Activated CD4-positive, alpha-beta memory T cell treated with anti-CD3 and anti-CD28 coated beads for 36 hours (primary cell): ENCODE measurements at regions of chr5 and their contacts with region 1.

Region 1: GRCh38 chr5:112146323-112147226 is 272.5 kb downstream of the EPB41L4A start:
- DNase-seq: peak; percentile 64
- H3K4me3 Mint-ChIP-seq: no peak overlapping the region
- H3K27ac Mint-ChIP-seq: peak overlapping the region; percentile 45
- H3K4me1 Mint-ChIP-seq: no peaks in the 10 kb centered on the region
- H3K27me3 Mint-ChIP-seq: peaks cover 9% of the 10 kb centered on the region

Region 2: GRCh38 chr5:111530298-111530740 is 616.3 kb before region 1 on chr5:
- CTCF ChIA-PET with region 1: interaction called, 7 read pairs
- POLR2A ChIA-PET with region 1: no interaction called
- intact Hi-C with region 1: loop called (anchors 5 kb)
- DNase-seq: peak; percentile 88
- H3K4me3 Mint-ChIP-seq: peak overlapping the region; percentile 54
- H3K27ac Mint-ChIP-seq: peak overlapping the region; percentile 85
- H3K4me1 Mint-ChIP-seq: peaks cover 17% of the 10 kb centered on the region
- H3K27me3 Mint-ChIP-seq: no peaks in the 10 kb centered on the region

Region 3: GRCh38 chr5:111685971-111686370 is 460.6 kb before region 1 on chr5:
- CTCF ChIA-PET with region 1: no interaction called
- POLR2A ChIA-PET with region 1: no interaction called
- intact Hi-C with region 1: loop called (anchors 2 kb)
- DNase-seq: no peak
- H3K4me3 Mint-ChIP-seq: no peak overlapping the region
- H3K27ac Mint-ChIP-seq: no peak overlapping the region
- H3K4me1 Mint-ChIP-seq: no peaks in the 10 kb centered on the region
- H3K27me3 Mint-ChIP-seq: peaks cover under 1% of the 10 kb centered on the region

Region 4: DNA sequence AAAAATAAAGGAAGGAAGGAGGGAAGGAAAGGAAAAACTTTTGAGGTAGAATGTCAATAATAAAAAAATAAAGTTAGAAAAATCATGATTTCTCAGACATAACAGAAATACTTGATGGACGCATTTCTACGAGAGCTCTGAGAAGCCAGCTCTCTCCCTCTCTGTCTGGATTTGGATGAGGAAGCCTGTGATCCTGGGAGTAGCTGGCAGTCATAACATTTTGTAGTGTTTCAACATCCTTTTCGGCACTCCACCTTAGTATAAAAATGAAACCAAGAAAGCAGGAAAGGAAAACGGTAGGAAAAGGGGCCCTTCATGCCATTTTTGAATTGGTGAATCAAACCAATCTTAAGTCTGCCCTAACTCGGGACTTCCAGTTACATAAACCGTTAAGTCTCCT is 48.8 kb before region 1 on chr5:
- CTCF ChIA-PET with region 1: no interaction called
- POLR2A ChIA-PET with region 1: no interaction called
- intact Hi-C with region 1: no loop called
- DNase-seq: no peak
- H3K4me3 Mint-ChIP-seq: no peak overlapping the region
- H3K27ac Mint-ChIP-seq: no peak overlapping the region
- H3K4me1 Mint-ChIP-seq: no peaks in the 10 kb centered on the region
- H3K27me3 Mint-ChIP-seq: peaks cover 4% of the 10 kb centered on the region